ENCODE measurements at regions of chr7 and their contacts with region 1.

Region 1: GRCh38 chr7:37181550-37181932 is 267.1 kb downstream of the ELMO1 start:
- DNase-seq: no peak

Region 2: DNA sequence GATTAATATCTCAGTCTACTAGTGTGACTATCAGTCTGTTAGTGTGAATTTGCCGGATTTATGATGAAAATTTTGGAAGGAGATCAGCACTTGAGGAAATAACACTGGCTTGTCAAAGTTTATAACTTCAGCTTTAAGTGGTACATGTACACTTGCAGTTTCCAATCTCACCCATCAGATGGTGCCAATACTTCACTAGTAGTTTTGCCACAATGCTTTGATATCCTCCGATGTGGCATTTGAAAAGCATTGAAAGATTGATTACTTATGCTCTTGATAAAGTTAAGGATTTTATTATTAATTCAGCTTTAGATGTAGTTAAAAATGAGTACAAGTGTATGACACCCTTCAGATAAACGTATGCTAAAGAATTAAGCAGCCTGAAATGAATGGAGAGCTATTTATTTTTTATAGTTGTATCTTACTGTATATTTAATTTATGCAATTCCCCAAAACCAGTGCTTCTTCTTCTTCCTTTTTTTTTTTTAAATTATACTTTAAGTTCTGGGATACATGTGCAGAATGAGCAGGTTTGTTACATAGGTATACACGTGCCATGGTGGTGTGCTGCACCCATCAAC is 693.7 kb before region 1 on chr7:
- intact Hi-C with region 1: loop called (anchors 5 kb)
- DNase-seq: no peak

Region 3: DNA sequence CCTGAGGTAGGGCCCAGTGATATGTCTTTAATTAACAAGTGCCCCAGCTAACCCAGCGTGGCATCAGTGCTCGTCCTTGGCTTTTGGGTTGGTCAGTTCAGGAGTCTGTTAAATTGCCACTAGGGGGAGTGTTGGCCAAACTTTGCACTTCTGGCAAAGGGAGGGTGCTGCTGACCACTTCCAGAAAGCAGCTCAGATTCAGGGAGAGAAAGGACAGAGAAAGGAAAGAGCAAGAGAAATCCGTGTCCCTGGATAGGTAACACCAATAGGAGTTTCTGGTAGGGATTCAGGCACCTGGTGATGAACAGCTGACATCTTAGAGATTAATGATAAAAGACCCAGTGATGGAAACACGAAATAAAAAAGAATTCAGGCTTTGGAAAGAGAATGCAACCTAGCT is 214.2 kb before region 1 on chr7:
- intact Hi-C with region 1: loop called (anchors 1 kb)
- DNase-seq: no peak

Region 4: DNA sequence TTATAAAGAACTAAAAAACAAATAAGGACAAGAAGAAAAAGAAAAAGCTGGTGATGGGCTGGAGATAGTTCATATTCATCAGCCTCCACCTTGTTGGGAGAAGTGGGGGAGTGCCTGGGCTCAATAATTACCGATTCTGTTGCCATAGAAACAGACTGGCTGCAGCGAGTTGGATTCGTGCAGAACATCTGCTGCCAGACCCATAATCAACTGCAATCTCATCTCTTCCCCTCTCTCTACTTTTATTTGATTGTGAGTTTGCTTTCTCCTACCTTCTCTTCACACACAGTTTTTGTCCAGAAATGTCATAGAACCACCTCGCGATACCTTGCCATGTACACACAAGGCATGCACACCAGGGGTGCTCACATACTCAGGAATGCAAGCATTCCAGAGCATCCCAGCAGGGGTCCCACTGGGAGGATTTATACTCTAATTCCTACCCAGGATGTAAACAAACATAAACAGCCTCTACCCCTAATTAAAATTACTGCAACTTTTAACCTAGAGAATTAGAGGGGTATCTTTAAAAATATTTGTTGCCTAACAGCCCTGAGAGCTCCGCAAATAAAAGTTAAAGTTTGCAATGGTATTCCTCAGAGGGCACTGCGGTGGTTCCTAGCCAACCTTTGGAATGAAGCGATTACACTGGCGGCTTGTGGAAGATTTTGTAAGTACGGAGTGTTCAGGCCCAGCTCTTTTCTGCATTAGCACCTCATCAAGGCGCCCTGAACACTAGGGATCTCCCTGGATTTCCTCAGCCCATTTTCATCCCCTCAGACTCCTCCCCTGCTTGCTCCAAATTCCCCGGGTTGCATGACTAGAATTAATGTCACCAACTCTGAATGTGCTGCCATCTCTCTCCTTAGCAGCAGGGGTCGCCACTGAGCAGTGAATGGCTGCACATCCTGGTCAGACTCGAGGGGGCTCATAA is 194.8 kb before region 1 on chr7:
- intact Hi-C with region 1: loop called (anchors 1 kb)
- DNase-seq: peak; percentile 86

Region 5: DNA sequence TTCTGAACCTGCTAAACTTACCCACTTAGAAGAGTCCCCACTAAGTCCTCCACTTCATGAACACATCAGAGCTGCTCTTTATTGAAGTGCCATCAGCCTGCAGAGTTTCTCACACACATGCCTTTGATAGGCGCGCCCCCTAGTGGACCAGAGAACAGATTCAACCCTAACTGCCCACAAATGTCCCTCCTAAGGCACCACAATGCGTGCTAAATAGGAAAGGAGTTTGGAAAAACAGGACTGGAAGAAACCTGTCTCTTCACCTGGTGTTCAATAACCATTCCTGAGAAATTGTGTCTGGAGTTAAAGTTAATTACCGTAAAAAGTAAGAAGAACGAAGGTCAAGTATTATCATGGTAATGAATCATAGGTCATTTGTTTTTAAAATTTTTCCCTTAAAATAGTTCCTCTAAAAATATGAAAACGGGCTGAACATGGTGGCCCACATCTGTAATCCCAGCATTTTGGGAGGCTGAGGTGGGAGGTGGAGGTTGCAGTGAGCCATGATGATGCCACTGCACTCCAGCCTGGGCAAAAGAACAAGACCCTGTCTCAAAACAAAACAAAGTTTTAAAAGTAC is 17.5 kb after region 1 on chr7:
- intact Hi-C with region 1: loop called (anchors 2 kb)
- DNase-seq: peak; percentile 87